PC-3 (cell line): ENCODE measurements at regions of chr21 and their contacts with region 1.

Region 1: GRCh38 chr21:41726945-41727783 is 39.7 kb downstream of the RIPK4 start:
- DNase-seq: peak; percentile 87
- ATAC-seq: peak; percentile 95
- H3K4me3 ChIP-seq: no peak overlapping the region
- H3K27ac ChIP-seq: peak overlapping the region; percentile 96
- H3K4me1 ChIP-seq: peaks cover 41% of the 10 kb centered on the region
- H3K27me3 ChIP-seq: no peaks in the 10 kb centered on the region
- CTCF ChIP-seq: peak; percentile 23; the same call in 1 of the 2 replicates

Region 2: GRCh38 chr21:41703857-41704786 is 23.0 kb before region 1 on chr21:
- CTCF ChIA-PET with region 1: no interaction called
- POLR2A ChIA-PET with region 1: no interaction called
- intact Hi-C with region 1: loop called (anchors 1 kb)
- DNase-seq: peak; percentile 98
- ATAC-seq: peak; percentile 88
- H3K4me3 ChIP-seq: no peak overlapping the region
- H3K27ac ChIP-seq: peak overlapping the region; percentile 97
- H3K4me1 ChIP-seq: peaks cover 52% of the 10 kb centered on the region
- H3K27me3 ChIP-seq: no peaks in the 10 kb centered on the region
- CTCF ChIP-seq: no peak